ENCODE measurements at regions of chr17 and their contacts with region 1.

Region 1: DNA sequence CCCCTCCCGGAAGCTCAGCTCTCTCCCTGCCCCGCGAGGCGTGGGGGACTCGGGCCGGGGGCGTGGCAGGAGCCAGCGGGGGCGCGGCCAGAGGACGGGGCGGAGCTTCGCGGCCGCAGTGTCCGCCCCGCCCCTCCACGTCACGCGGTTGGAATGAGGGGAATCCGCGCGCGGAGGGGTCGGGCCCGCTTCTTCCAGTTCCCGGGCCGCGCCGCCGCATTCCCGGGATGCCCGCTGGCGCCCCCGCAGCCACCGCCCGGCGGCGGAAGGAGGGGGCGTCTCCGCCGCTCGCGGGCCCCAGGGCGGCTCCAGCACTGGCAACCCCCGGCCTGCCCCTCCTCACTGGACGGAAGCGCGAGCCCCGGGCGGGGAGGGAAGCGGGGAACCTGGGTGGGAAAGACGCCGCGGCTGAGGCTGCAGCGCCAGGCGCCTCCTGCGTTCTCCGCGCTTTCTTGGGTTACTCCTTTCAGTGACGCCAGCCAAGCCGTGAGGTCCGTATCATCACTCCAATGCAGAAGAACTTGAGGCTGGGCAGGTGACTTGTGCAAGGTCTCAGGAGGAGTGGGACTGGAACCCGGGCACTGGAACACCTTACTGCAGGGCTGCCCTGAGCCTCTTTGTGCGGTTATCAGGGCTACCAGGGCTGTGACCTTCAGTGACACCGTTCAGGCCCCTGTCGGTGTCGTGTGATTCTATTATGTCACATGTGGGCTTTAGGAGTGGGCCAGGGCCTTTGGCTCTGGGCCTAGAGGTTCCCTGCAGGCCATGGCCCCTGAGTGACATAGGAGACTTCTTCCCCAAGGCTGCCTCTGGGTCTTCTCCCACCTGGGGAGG is 4.2 kb downstream of the MYO1C start:
- DNase-seq: peak; percentile 88
- ATAC-seq: peak; percentile 32
- H3K4me3 ChIP-seq: peak overlapping the region; percentile 31 to 83 (median 68)
- H3K4me3 Mint-ChIP-seq: peak overlapping the region; percentile 87
- H3K27ac ChIP-seq: peak overlapping the region; percentile 81 to 90
- H3K27ac Mint-ChIP-seq: peak overlapping the region; percentile 91
- H3K4me1 ChIP-seq: peaks cover 36 to 65% of the 10 kb centered on the region in 2 donors
- H3K4me1 Mint-ChIP-seq: peaks cover 54% of the 10 kb centered on the region
- H3K27me3 ChIP-seq: peaks cover 0 to 5% (median 0%) of the 10 kb centered on the region in 4 experiments
- H3K27me3 Mint-ChIP-seq: no peaks in the 10 kb centered on the region
- CTCF ChIP-seq: no peak

Region 2: DNA sequence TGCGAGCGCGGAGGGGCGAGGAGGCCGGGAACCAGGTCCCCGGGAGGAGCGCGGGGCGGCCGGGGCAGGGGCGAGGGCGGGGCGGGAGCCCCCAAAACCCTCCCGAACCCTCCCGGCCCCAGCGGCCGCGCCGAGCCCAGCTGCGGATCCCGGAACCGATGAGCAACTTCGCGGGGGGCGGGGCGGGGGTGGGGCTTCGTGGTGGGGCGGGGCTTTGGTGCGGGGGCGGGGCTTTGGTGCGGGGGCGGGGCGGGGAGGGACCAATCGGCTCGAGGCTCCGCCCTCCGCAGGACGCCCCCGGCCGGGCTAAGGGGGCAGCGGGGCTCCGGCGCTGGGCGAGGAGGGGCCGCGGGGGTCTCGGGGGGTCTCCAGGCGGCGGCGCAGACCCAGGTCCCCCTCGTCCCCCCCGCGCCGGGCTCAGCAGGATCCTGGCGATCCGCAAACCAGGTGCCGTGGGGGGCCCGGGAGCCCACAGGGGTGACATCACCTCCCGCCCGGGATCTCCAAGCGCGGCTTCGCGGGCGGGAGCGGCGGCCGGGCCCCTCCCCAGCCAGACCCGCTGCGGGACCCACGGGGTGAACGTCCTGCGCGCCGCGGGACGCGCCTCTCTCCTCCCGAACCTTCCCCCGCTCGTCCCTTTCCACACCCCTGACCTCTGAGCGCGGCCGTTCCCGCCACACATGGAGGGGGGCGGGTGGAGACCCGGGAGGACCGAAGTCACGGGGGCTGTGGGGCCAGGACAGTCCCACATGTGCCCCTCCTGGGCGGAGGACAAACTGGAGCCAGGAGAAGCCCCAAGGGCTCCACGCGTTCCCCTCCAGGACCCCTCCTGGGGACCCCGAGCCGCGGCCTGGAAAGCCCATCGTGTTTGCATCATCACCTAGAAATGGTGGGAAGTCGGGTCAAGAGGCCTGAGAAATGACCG is 308.2 kb before region 1 on chr17 and contains the start of gene ABR:
- CTCF ChIA-PET with region 1: no interaction called
- POLR2A ChIA-PET with region 1: interaction called, 3 read pairs
- intact Hi-C with region 1: loop called (anchors 2 kb)
- DNase-seq: peak; percentile 70
- ATAC-seq: peak; percentile 9
- H3K4me3 ChIP-seq: peak within 1 kb of the TSS in 4 of 5 experiments; percentile 47 to 71 (median 55)
- H3K4me3 Mint-ChIP-seq: peak within 1 kb of the TSS; percentile 87
- H3K27ac ChIP-seq: peak within 1 kb of the TSS in 1 of 2 donors; percentile 36
- H3K27ac Mint-ChIP-seq: peak within 1 kb of the TSS; percentile 53
- H3K4me1 ChIP-seq: peaks cover 59 to 69% of the 10 kb centered on the region in 2 donors
- H3K4me1 Mint-ChIP-seq: peaks cover 59% of the 10 kb centered on the region
- H3K27me3 ChIP-seq: peaks cover 0 to 24% (median 10%) of the 10 kb centered on the region in 4 experiments
- H3K27me3 Mint-ChIP-seq: no peaks in the 10 kb centered on the region
- CTCF ChIP-seq: no peak
- total RNA-seq, gene ABR: 262 and 304 TPM in 2 replicates

Region 3: GRCh38 chr17:1197781-1198490 is 290.3 kb before region 1 on chr17:
- CTCF ChIA-PET with region 1: no interaction called
- POLR2A ChIA-PET with region 1: no interaction called
- intact Hi-C with region 1: loop called (anchors 5 kb)
- DNase-seq: peak; percentile 92
- ATAC-seq: peak; percentile 87
- H3K4me3 ChIP-seq: peak overlapping the region in 1 of 5 experiments; percentile 29
- H3K4me3 Mint-ChIP-seq: peak overlapping the region; percentile 82
- H3K27ac ChIP-seq: peak overlapping the region; percentile 86 to 91
- H3K27ac Mint-ChIP-seq: peak overlapping the region; percentile 96
- H3K4me1 ChIP-seq: peaks cover 60 to 62% of the 10 kb centered on the region in 2 donors
- H3K4me1 Mint-ChIP-seq: peaks cover 60% of the 10 kb centered on the region
- H3K27me3 ChIP-seq: no peaks in the 10 kb centered on the region
- H3K27me3 Mint-ChIP-seq: no peaks in the 10 kb centered on the region
- CTCF ChIP-seq: no peak

Region 4: DNA sequence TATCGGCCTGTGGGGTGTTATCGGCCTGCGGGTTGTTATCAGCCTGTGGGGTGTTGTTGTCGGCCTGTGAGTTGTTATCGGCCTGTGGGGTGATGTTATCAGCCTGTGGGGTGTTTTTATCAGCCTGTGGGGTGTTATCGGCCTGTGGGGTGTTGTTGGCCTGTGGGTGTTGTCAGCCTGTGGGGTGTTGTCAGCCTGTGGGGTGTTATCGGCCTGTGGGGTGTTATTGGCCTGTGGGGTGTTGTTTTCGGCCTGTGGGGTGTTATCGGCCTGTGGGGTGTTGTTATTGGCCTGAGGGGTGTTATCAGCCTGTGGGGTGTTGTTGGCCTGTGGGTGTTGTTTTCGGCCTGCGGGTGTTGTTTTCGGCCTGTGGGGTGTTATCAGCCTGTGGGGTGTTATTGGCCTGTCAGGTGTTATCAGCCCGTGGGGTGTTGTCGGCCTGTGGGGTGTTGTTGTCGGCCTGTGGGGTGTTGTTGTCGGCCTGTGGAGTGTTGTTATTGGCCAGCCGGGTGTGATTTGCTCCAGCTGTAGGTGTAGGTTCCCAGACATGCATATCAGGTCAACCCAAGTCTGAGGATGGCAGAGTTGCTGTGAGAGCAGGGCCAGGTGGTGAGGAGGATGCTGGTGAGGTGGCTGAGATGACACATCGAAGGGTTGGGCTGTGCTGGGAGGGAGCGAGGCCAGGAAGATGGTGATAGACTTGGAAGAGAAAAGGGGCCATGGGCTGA is 201.7 kb before region 1 on chr17:
- CTCF ChIA-PET with region 1: no interaction called
- POLR2A ChIA-PET with region 1: no interaction called
- intact Hi-C with region 1: no loop called
- DNase-seq: no peak
- ATAC-seq: no peak
- H3K4me3 ChIP-seq: no peak overlapping the region
- H3K4me3 Mint-ChIP-seq: no peak overlapping the region
- H3K27ac ChIP-seq: no peak overlapping the region
- H3K27ac Mint-ChIP-seq: no peak overlapping the region
- H3K4me1 ChIP-seq: no peaks in the 10 kb centered on the region
- H3K4me1 Mint-ChIP-seq: no peaks in the 10 kb centered on the region
- H3K27me3 ChIP-seq: no peaks in the 10 kb centered on the region
- H3K27me3 Mint-ChIP-seq: no peaks in the 10 kb centered on the region
- CTCF ChIP-seq: no peak

Region 5: GRCh38 chr17:1399679-1400512 is 88.4 kb before region 1 on chr17 and contains the start of gene YWHAE:
- CTCF ChIA-PET with region 1: interaction called, 5 read pairs
- POLR2A ChIA-PET with region 1: interaction called, 3 read pairs
- intact Hi-C with region 1: loop called (anchors 1 kb)
- DNase-seq: peak; percentile 96
- ATAC-seq: peak; percentile 81
- H3K4me3 ChIP-seq: peak within 1 kb of the TSS; percentile 75 to 94 (median 85)
- H3K4me3 Mint-ChIP-seq: peak within 1 kb of the TSS; percentile 100
- H3K27ac ChIP-seq: peak within 1 kb of the TSS; percentile 84 to 94
- H3K27ac Mint-ChIP-seq: peak within 1 kb of the TSS; percentile 99
- H3K4me1 ChIP-seq: peaks cover 20 to 35% of the 10 kb centered on the region in 2 donors
- H3K4me1 Mint-ChIP-seq: peaks cover 32% of the 10 kb centered on the region
- H3K27me3 ChIP-seq: no peaks in the 10 kb centered on the region
- H3K27me3 Mint-ChIP-seq: no peaks in the 10 kb centered on the region
- CTCF ChIP-seq: no peak
- total RNA-seq, gene YWHAE: 149 and 151 TPM in 2 replicates

Region 6: GRCh38 chr17:1455797-1456599 is 32.2 kb before region 1 on chr17 and contains the start of gene CRK:
- CTCF ChIA-PET with region 1: interaction called, 4 read pairs
- POLR2A ChIA-PET with region 1: interaction called, 4 read pairs
- intact Hi-C with region 1: loop called (anchors 1 kb)
- DNase-seq: peak; percentile 98
- ATAC-seq: peak; percentile 92
- H3K4me3 ChIP-seq: peak within 1 kb of the TSS; percentile 68 to 94 (median 82)
- H3K4me3 Mint-ChIP-seq: peak within 1 kb of the TSS; percentile 97
- H3K27ac ChIP-seq: peak within 1 kb of the TSS; percentile 79 to 97
- H3K27ac Mint-ChIP-seq: peak within 1 kb of the TSS; percentile 96
- H3K4me1 ChIP-seq: peaks cover 15 to 24% of the 10 kb centered on the region in 2 donors
- H3K4me1 Mint-ChIP-seq: peaks cover 47% of the 10 kb centered on the region
- H3K27me3 ChIP-seq: peaks cover 0 to 5% (median 0%) of the 10 kb centered on the region in 4 experiments
- H3K27me3 Mint-ChIP-seq: peaks cover 4% of the 10 kb centered on the region
- CTCF ChIP-seq: peak; percentile 7
- total RNA-seq, gene CRK: 31.9 and 36.4 TPM in 2 replicates

Region 7: DNA sequence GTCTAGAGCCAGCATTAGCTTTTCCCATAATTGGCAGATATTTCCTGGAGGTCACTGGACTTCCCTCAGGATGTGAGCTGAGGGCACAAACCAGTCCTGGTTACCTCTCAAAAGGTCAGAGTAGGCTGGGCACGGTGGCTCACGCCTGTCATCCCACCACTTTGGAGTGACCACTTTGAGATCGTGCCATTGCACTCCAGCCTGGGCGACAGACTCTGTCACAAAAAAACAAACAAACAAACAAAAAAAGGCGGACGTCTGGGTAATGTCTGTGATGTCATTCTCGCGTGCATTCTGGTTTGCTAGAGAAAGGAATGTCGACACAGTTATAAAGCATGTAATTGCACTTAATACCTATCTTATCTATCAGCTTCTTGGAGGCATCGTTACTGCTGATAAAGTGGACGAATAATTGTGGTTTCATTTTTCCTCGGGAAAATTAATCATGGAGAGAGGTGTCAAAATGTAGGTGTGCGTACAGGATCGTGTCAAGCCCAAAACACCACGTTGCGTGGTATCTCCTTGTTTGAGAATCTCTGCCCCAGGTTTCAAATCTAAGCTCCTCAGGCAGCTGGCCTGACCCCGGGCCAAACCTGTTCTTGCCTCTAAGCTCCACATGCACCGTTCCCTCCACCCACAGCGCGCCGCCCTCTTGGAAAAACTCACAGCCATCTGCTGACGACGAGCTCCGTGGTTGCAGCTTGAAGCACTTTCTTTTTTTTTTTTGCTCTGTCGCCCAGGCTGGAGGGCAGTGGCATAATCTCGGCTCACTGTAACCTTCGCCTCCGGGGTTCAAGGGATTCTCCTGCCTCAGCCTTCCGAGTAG is 25.7 kb before region 1 on chr17:
- CTCF ChIA-PET with region 1: interaction called, 4 read pairs
- POLR2A ChIA-PET with region 1: interaction called, 8 read pairs
- intact Hi-C with region 1: loop called (anchors 1 kb)
- DNase-seq: peak; percentile 24
- ATAC-seq: no peak
- H3K4me3 ChIP-seq: peak overlapping the region in 2 of 5 experiments; percentile 4 to 30
- H3K4me3 Mint-ChIP-seq: peak overlapping the region; percentile 76
- H3K27ac ChIP-seq: no peak overlapping the region
- H3K27ac Mint-ChIP-seq: peak overlapping the region; percentile 91
- H3K4me1 ChIP-seq: peaks cover 20 to 37% of the 10 kb centered on the region in 2 donors
- H3K4me1 Mint-ChIP-seq: peaks cover 29% of the 10 kb centered on the region
- H3K27me3 ChIP-seq: peaks cover 0 to 2% (median 0%) of the 10 kb centered on the region in 4 experiments
- H3K27me3 Mint-ChIP-seq: peaks cover 4% of the 10 kb centered on the region
- CTCF ChIP-seq: no peak

Region 8: GRCh38 chr17:1474402-1475189 is 13.7 kb before region 1 on chr17:
- CTCF ChIA-PET with region 1: interaction called, 3 read pairs
- POLR2A ChIA-PET with region 1: interaction called, 24 read pairs
- intact Hi-C with region 1: loop called (anchors 1 kb)
- DNase-seq: peak; percentile 75
- ATAC-seq: peak; percentile 56
- H3K4me3 ChIP-seq: peak overlapping the region in 1 of 5 experiments; percentile 1
- H3K4me3 Mint-ChIP-seq: peak overlapping the region; percentile 82
- H3K27ac ChIP-seq: peak overlapping the region; percentile 10 to 81
- H3K27ac Mint-ChIP-seq: peak overlapping the region; percentile 81
- H3K4me1 ChIP-seq: peaks cover 36 to 66% of the 10 kb centered on the region in 2 donors
- H3K4me1 Mint-ChIP-seq: peaks cover 42% of the 10 kb centered on the region
- H3K27me3 ChIP-seq: no peaks in the 10 kb centered on the region
- H3K27me3 Mint-ChIP-seq: no peaks in the 10 kb centered on the region
- CTCF ChIP-seq: no peak